Endothelial cell of umbilical vein (primary cell): ENCODE measurements at regions of chr3 and their contacts with region 1.

Region 1: GRCh38 chr3:17233398-17233800 is 348.6 kb downstream of the PLCL2 start:
- DNase-seq: peak; percentile 74
- H3K4me3 ChIP-seq: no peak overlapping the region
- H3K27ac ChIP-seq: no peak overlapping the region
- H3K4me1 ChIP-seq: peaks cover 10% of the 10 kb centered on the region
- H3K27me3 ChIP-seq: no peaks in the 10 kb centered on the region
- CTCF ChIP-seq: peak; percentile 39 to 48
- POLR2A ChIP-seq: no peak

Region 2: DNA sequence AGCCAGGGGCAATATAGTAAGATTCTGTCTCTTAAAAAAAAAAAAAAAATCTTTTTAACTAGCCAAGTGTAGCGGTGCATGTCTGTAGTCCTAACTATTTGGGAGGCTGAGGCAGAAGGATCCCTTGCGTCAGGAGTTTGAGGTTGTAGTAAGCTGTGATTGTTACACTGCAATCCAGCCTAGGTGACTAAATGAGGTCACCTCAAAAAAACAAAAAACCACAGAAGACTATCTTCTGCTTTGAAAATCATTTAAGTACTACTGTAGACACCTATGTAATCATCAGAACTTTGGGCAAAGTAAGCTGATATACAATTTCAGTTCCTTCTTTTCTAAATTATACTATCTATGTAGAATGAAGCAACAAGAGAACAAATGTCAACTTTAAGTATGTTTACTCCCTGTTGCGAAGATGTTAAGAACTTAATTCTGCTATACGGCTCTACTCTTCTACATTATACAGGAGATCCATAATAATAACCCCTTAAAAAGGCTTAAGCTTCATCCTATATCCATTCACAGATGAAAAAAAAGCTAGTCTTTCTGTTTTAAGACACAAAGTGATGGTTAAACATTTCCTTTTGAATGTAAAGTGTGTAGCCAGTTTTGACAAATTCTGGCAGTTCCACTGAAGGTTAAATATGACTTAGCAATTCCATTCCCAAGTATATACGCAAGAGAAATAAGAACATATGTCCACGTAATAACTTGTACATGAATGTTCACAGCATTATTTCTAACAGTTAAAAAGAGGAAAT is 643.4 kb before region 1 on chr3:
- CTCF ChIA-PET with region 1: no interaction called
- POLR2A ChIA-PET with region 1: no interaction called
- dilution Hi-C with region 1: no loop called
- intact Hi-C with region 1: no loop called
- DNase-seq: no peak
- H3K4me3 ChIP-seq: no peak overlapping the region
- H3K27ac ChIP-seq: no peak overlapping the region
- H3K4me1 ChIP-seq: no peaks in the 10 kb centered on the region
- H3K27me3 ChIP-seq: no peaks in the 10 kb centered on the region
- CTCF ChIP-seq: no peak
- POLR2A ChIP-seq: no peak

Region 3: GRCh38 chr3:16945330-16945729 is 288.1 kb before region 1 on chr3:
- CTCF ChIA-PET with region 1: no interaction called
- POLR2A ChIA-PET with region 1: no interaction called
- dilution Hi-C with region 1: no loop called
- intact Hi-C with region 1: loop called (anchors 10 kb)
- DNase-seq: peak; percentile 58
- H3K4me3 ChIP-seq: no peak overlapping the region
- H3K27ac ChIP-seq: no peak overlapping the region
- H3K4me1 ChIP-seq: no peaks in the 10 kb centered on the region
- H3K27me3 ChIP-seq: no peaks in the 10 kb centered on the region
- CTCF ChIP-seq: no peak
- POLR2A ChIP-seq: no peak

Region 4: DNA sequence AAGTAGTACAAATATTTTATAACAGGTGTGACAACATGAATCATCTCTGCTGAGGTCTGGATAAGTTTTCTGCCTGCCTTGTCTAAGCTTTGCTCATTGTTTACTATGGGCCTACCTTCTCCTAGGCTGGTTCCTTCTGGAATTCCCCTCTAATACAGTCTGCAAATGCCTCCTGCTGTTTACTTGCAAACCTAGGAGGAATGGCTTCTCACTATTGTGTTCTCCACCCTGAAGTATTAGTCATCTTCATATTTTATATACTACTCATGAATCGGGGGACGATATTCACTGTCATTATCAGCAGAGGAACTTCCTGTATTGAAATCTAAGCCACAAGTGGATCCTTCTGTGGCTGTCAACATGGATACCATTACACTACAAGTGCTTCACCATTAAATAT is 193.8 kb before region 1 on chr3:
- CTCF ChIA-PET with region 1: no interaction called
- POLR2A ChIA-PET with region 1: no interaction called
- dilution Hi-C with region 1: no loop called
- intact Hi-C with region 1: loop called (anchors 2 kb)
- DNase-seq: peak; percentile 88
- H3K4me3 ChIP-seq: no peak overlapping the region
- H3K27ac ChIP-seq: peak overlapping the region; percentile 56
- H3K4me1 ChIP-seq: peaks cover 25% of the 10 kb centered on the region
- H3K27me3 ChIP-seq: no peaks in the 10 kb centered on the region
- CTCF ChIP-seq: no peak
- POLR2A ChIP-seq: no peak

Region 5: DNA sequence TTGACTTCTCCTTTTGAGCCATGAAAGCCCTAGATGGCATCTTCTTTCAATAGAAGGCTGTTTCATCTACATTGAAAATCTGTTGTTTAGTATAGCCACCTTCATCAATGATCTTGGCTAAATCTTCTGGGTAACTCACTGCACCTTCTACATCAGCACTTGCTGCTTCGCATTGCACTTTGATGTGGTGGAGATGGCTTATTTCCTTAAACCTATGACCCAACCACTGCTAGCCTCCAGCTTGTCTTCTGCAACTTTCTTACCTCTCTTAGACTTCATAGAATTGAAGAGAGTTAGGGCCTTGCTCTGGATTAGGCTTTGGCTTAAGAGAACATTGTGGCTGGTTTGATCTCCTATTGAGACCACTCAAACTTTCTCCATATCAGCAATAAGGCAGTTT is 158.8 kb before region 1 on chr3:
- CTCF ChIA-PET with region 1: no interaction called
- POLR2A ChIA-PET with region 1: no interaction called
- dilution Hi-C with region 1: no loop called
- intact Hi-C with region 1: loop called (anchors 1 kb)
- DNase-seq: no peak
- H3K4me3 ChIP-seq: no peak overlapping the region
- H3K27ac ChIP-seq: no peak overlapping the region
- H3K4me1 ChIP-seq: no peaks in the 10 kb centered on the region
- H3K27me3 ChIP-seq: no peaks in the 10 kb centered on the region
- CTCF ChIP-seq: no peak
- POLR2A ChIP-seq: no peak

Region 6: GRCh38 chr3:17491601-17492000 is 258.2 kb after region 1 on chr3:
- CTCF ChIA-PET with region 1: no interaction called
- POLR2A ChIA-PET with region 1: no interaction called
- dilution Hi-C with region 1: no loop called
- intact Hi-C with region 1: no loop called
- DNase-seq: peak; percentile 25
- H3K4me3 ChIP-seq: no peak overlapping the region
- H3K27ac ChIP-seq: no peak overlapping the region
- H3K4me1 ChIP-seq: no peaks in the 10 kb centered on the region
- H3K27me3 ChIP-seq: no peaks in the 10 kb centered on the region
- CTCF ChIP-seq: no peak
- POLR2A ChIP-seq: no peak

Region 7: DNA sequence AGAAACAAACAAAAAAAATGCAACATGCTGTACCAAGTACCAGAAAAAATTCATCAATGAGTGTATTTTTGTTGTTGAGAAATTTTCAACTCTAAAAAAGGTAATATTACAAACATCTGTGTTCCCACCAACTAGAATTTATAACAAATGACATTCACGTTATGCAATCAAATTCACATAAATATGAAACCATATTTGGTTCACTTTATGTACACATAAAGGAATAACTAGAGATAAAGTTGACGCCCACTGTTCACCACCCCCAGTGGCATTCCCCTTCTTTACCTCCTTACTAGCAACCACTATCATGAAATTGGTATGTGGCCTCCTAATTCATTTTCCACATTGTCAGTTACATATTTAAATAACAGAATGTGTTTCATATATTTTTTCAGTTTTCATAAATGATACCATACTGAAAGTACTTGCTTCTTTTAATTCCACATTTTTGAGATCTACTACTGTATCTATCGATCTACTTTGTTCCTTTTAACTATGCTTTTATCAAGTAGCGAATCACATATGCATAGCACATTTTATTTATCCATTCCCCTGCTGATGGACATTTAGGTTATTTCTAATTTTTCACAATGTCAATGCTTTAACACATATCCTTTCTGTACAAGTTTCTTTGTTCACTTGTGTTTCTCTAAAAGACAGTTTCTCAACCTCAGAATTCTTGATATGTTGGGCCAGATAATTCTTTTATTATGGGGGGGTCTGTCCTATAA is 474.6 kb after region 1 on chr3:
- CTCF ChIA-PET with region 1: no interaction called
- POLR2A ChIA-PET with region 1: no interaction called
- dilution Hi-C with region 1: no loop called
- intact Hi-C with region 1: no loop called
- DNase-seq: no peak
- H3K4me3 ChIP-seq: no peak overlapping the region
- H3K27ac ChIP-seq: no peak overlapping the region
- H3K4me1 ChIP-seq: peaks cover 8% of the 10 kb centered on the region
- H3K27me3 ChIP-seq: no peaks in the 10 kb centered on the region
- CTCF ChIP-seq: no peak
- POLR2A ChIP-seq: no peak